Naive thymus-derived CD4-positive, alpha-beta T cell (primary cell): ENCODE measurements at regions of chr3 and their contacts with region 1.

Region 1: DNA sequence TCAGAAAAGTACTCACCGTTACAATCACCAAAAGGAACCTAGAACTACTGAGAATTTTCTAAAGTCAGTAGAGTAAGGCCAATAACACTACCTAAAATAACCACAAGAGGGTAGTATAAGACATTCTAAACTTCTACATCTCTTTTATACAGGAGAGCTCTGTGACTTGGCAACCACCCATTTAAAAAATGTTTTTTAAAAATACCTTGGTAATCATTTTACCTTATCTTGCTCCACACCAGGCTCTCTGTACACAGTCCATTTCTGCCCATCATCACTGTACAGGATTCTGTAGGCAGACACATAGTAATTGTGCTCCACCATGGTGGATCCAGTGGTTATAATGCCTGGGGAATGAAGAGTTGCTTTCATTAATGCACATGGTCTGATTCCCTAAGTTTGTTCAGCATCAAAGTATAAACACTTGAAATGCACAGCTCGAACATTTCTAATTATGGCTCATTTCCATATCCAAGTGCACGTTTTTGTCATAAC is 54.5 kb downstream of the ST3GAL6 start:
- DNase-seq: peak in 6 of 9 donors; percentile 12 to 54 (median 40)
- ATAC-seq: peak; percentile 83
- H3K4me3 ChIP-seq: no peak overlapping the region
- H3K4me3 Mint-ChIP-seq: no peak overlapping the region
- H3K27ac ChIP-seq: no peak overlapping the region
- H3K27ac Mint-ChIP-seq: no peak overlapping the region
- H3K4me1 ChIP-seq: no peaks in the 10 kb centered on the region
- H3K4me1 Mint-ChIP-seq: peaks cover 0 to 6% (median 1%) of the 10 kb centered on the region in 7 donors
- H3K27me3 ChIP-seq: no peaks in the 10 kb centered on the region
- H3K27me3 Mint-ChIP-seq: no peaks in the 10 kb centered on the region

Region 2: GRCh38 chr3:98188545-98188944 is 629.0 kb before region 1 on chr3:
- CTCF ChIA-PET with region 1: no interaction called
- POLR2A ChIA-PET with region 1: no interaction called
- intact Hi-C with region 1: loop called in 1 of 2 experiments (anchors 5 kb)
- DNase-seq: peak in 3 of 9 donors; percentile 1 to 10 (median 3)
- ATAC-seq: peak; percentile 66
- H3K4me3 ChIP-seq: no peak overlapping the region
- H3K4me3 Mint-ChIP-seq: no peak overlapping the region
- H3K27ac ChIP-seq: no peak overlapping the region
- H3K27ac Mint-ChIP-seq: no peak overlapping the region
- H3K4me1 ChIP-seq: no peaks in the 10 kb centered on the region
- H3K4me1 Mint-ChIP-seq: peaks cover 0 to 5% (median 1%) of the 10 kb centered on the region in 7 donors
- H3K27me3 ChIP-seq: no peaks in the 10 kb centered on the region
- H3K27me3 Mint-ChIP-seq: peaks cover 8 to 19% (median 12%) of the 10 kb centered on the region in 5 donors

Region 3: DNA sequence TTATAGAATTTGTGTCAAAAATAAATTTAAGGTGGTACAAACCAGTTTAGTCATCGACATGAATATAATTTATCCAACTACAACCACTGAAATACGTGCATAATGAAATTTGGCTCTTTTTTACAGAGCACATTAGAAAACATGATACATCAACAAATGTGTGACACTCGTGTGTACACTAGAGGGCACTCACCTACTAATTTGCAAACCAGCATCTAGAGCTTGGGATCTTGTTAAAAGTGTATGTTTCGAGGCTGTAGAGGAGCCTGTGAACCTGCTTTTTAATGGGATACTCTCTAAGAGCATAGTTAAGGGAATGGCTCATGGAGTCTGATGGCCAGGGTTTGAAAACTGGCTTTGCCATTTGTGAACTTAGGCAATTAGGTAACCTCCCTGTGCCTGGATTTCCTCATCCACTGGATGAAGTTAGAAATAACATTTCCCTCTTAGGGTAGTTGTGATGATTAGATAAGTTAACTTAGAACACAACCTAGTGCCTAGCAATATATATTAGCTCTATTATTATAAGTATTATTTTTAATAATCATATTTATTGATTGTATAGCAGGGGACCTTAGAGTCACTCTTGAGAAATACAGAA is 215.4 kb before region 1 on chr3:
- CTCF ChIA-PET with region 1: interaction called, 14 read pairs
- POLR2A ChIA-PET with region 1: no interaction called
- intact Hi-C with region 1: loop called (anchors 1 kb)
- DNase-seq: peak in 5 of 9 donors; percentile 29 to 48 (median 35)
- ATAC-seq: peak; percentile 80
- H3K4me3 ChIP-seq: no peak overlapping the region
- H3K4me3 Mint-ChIP-seq: no peak overlapping the region
- H3K27ac ChIP-seq: no peak overlapping the region
- H3K27ac Mint-ChIP-seq: no peak overlapping the region
- H3K4me1 ChIP-seq: no peaks in the 10 kb centered on the region
- H3K4me1 Mint-ChIP-seq: peaks cover 0 to 10% (median 0%) of the 10 kb centered on the region in 7 donors
- H3K27me3 ChIP-seq: no peaks in the 10 kb centered on the region
- H3K27me3 Mint-ChIP-seq: peaks cover 9 to 22% (median 13%) of the 10 kb centered on the region in 5 donors

Region 4: DNA sequence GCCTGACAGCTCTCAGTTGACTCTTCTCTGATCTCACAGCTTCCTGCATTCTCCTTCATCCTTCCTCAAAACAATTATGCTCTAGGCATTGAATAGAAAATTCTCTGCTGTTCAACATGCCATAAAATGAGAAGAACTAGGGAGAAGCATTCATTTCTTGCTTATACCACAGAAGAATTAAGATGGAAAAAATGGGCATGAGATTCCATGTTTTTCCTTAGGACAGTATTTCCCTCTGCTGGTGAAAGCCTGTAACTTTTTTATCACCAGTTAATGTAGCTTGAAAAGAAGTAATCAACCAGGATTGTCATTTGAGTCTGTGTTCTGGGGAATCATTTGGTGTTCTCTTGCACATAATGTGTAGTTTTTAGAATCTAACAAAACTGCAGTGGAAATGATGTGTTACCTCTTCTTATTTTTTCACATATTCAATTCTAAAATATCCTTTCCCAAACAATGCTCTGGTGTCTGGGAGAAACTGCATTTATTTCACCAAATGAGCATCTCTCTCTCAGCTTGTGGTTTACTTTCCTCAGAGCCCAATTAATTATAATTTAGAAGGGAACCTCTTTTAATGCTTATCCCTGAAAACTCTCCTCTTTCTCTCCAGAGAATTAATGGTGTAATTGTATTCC is 176.7 kb after region 1 on chr3:
- CTCF ChIA-PET with region 1: interaction called, 5 read pairs
- POLR2A ChIA-PET with region 1: no interaction called
- intact Hi-C with region 1: loop called (anchors 1 kb)
- DNase-seq: no peak
- ATAC-seq: no peak
- H3K4me3 ChIP-seq: no peak overlapping the region
- H3K4me3 Mint-ChIP-seq: no peak overlapping the region
- H3K27ac ChIP-seq: no peak overlapping the region
- H3K27ac Mint-ChIP-seq: no peak overlapping the region
- H3K4me1 ChIP-seq: no peaks in the 10 kb centered on the region
- H3K4me1 Mint-ChIP-seq: no peaks in the 10 kb centered on the region
- H3K27me3 ChIP-seq: no peaks in the 10 kb centered on the region
- H3K27me3 Mint-ChIP-seq: peaks cover 0 to 13% (median 4%) of the 10 kb centered on the region in 5 donors

Region 5: GRCh38 chr3:99532246-99532645 is 714.7 kb after region 1 on chr3:
- CTCF ChIA-PET with region 1: no interaction called
- POLR2A ChIA-PET with region 1: no interaction called
- intact Hi-C with region 1: loop called in 1 of 2 experiments (anchors 10 kb)
- DNase-seq: no peak
- ATAC-seq: peak; percentile 34
- H3K4me3 ChIP-seq: no peak overlapping the region
- H3K4me3 Mint-ChIP-seq: no peak overlapping the region
- H3K27ac ChIP-seq: no peak overlapping the region
- H3K27ac Mint-ChIP-seq: no peak overlapping the region
- H3K4me1 ChIP-seq: no peaks in the 10 kb centered on the region
- H3K4me1 Mint-ChIP-seq: no peaks in the 10 kb centered on the region
- H3K27me3 ChIP-seq: no peaks in the 10 kb centered on the region
- H3K27me3 Mint-ChIP-seq: peaks cover 0 to 4% (median 0%) of the 10 kb centered on the region in 5 donors

Region 6: GRCh38 chr3:99753268-99753975 is 935.8 kb after region 1 on chr3:
- CTCF ChIA-PET with region 1: interaction called, 6 read pairs
- POLR2A ChIA-PET with region 1: no interaction called
- intact Hi-C with region 1: loop called (anchors 1 kb)
- DNase-seq: peak in 6 of 9 donors; percentile 13 to 27 (median 22)
- ATAC-seq: peak; percentile 66
- H3K4me3 ChIP-seq: no peak overlapping the region
- H3K4me3 Mint-ChIP-seq: no peak overlapping the region
- H3K27ac ChIP-seq: no peak overlapping the region
- H3K27ac Mint-ChIP-seq: no peak overlapping the region
- H3K4me1 ChIP-seq: no peaks in the 10 kb centered on the region
- H3K4me1 Mint-ChIP-seq: no peaks in the 10 kb centered on the region
- H3K27me3 ChIP-seq: no peaks in the 10 kb centered on the region
- H3K27me3 Mint-ChIP-seq: peaks cover 0 to 37% (median 14%) of the 10 kb centered on the region in 5 donors

Region 7: GRCh38 chr3:99808151-99808794 is 990.7 kb after region 1 on chr3:
- CTCF ChIA-PET with region 1: interaction called, 3 read pairs
- POLR2A ChIA-PET with region 1: no interaction called
- intact Hi-C with region 1: loop called in 1 of 2 experiments (anchors 1 kb)
- DNase-seq: peak in 7 of 9 donors; percentile 23 to 38 (median 31)
- ATAC-seq: peak; percentile 67
- H3K4me3 ChIP-seq: no peak overlapping the region
- H3K4me3 Mint-ChIP-seq: no peak overlapping the region
- H3K27ac ChIP-seq: no peak overlapping the region
- H3K27ac Mint-ChIP-seq: peak overlapping the region in 1 of 9 donors; percentile 72
- H3K4me1 ChIP-seq: no peaks in the 10 kb centered on the region
- H3K4me1 Mint-ChIP-seq: peaks cover 0 to 4% (median 0%) of the 10 kb centered on the region in 7 donors
- H3K27me3 ChIP-seq: no peaks in the 10 kb centered on the region
- H3K27me3 Mint-ChIP-seq: peaks cover 0 to 5% (median 0%) of the 10 kb centered on the region in 5 donors